Activated naive CD4-positive, alpha-beta T cell treated with anti-CD3 and anti-CD28 coated beads for 36 hours (primary cell): ENCODE measurements at regions of chr11 and their contacts with region 1.

Region 1: DNA sequence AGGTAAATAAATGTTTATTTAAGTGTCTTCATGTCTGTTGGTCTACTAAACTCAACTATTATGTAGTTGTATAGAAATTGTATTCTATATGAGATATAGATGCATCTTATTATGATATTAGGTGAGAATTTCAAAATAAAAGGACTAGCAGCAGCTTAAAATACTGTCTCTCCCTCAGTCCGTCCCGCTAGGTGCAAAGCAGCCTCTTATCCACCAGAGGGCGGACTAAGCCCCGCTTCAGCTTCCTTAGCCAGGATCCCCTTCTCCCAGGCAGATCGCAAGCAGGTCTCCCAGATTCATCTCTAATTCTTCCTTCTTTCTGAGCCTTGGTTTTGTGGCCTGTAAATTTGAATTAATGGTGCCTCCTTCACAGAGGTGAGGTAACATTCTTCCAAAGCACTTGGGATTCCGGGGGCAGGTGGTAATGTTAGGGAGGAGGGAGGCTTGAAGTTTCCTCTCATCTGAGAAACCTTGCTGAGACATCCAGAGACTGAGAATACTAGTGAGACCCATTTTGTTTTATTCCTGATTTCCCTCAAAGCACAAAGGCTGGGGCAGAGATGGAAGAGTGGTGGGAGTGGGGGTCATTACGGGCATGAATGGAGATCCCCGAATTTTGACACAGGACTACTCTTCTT is 13.5 kb upstream of the INSC start:
- DNase-seq: peak; percentile 71
- H3K4me3 Mint-ChIP-seq: no peak overlapping the region
- H3K27ac Mint-ChIP-seq: no peak overlapping the region
- H3K4me1 Mint-ChIP-seq: no peaks in the 10 kb centered on the region
- H3K27me3 Mint-ChIP-seq: peaks cover 10% of the 10 kb centered on the region

Region 2: GRCh38 chr11:14954581-14954980 is 146.6 kb before region 1 on chr11:
- CTCF ChIA-PET with region 1: no interaction called
- intact Hi-C with region 1: no loop called
- DNase-seq: no peak
- H3K4me3 Mint-ChIP-seq: no peak overlapping the region
- H3K27ac Mint-ChIP-seq: no peak overlapping the region
- H3K4me1 Mint-ChIP-seq: no peaks in the 10 kb centered on the region
- H3K27me3 Mint-ChIP-seq: no peaks in the 10 kb centered on the region

Region 3: DNA sequence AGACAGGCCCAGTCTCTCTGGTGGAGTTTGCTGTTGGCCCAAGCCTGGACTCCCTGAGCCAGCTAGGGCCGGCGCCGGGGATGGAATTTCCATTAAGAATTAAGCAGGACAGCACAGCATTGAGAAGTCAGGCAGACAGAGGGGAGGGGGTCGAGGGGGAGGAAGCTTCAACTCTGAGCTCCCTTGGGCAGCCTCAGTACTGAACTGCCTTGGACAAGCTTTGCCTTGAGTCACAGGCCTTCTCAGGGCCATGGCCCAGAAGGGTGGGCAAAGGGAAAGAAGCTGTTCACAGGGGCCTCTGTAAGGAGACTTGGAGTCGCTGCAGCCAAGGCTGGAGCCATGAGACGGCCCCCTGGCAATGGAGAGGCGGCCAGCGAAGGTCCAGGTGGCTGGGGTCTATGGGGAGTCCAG is 10.9 kb after region 1 on chr11:
- CTCF ChIA-PET with region 1: interaction called, 19 read pairs
- intact Hi-C with region 1: no loop called
- DNase-seq: no peak
- H3K4me3 Mint-ChIP-seq: no peak overlapping the region
- H3K27ac Mint-ChIP-seq: no peak overlapping the region
- H3K4me1 Mint-ChIP-seq: peaks cover 11% of the 10 kb centered on the region
- H3K27me3 Mint-ChIP-seq: peaks cover 29% of the 10 kb centered on the region

Region 4: GRCh38 chr11:15159085-15159484 is 57.9 kb after region 1 on chr11:
- CTCF ChIA-PET with region 1: interaction called, 3 read pairs
- intact Hi-C with region 1: loop called (anchors 1 kb)
- DNase-seq: no peak
- H3K4me3 Mint-ChIP-seq: no peak overlapping the region
- H3K27ac Mint-ChIP-seq: no peak overlapping the region
- H3K4me1 Mint-ChIP-seq: no peaks in the 10 kb centered on the region
- H3K27me3 Mint-ChIP-seq: no peaks in the 10 kb centered on the region